ENCODE measurements at regions of chr9 and their contacts with region 1.

Region 1: GRCh38 chr9:114681594-114682332 is at the start of gene TEX48:
- DNase-seq: peak; percentile 63
- H3K4me3 ChIP-seq: no peak within 1 kb of the TSS
- H3K27ac ChIP-seq: no peak within 1 kb of the TSS
- H3K27me3 ChIP-seq: no peaks in the 10 kb centered on the region
- CTCF ChIP-seq: peak; percentile 89

Region 2: DNA sequence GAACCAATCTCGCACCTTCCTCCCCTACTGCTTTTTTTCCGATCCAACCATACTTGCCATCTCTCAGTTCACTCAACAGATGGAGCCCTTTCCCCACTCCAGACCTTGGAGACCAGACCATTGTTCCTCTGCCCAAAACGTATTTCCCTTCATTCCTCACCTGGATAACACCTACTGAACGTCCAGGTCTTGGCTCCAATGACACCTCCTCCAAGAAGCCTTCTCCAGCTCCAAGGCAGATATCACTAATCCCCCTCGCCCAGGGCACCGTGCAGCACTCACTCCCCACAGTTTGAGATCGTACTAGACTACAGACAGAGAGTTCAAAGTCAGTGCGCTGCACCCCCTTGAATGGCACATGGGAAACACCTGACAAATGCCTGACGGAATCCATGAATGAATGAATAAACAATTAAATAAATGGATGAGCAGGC is 246.9 kb before region 1 on chr9:
- in situ Hi-C with region 1: no loop called
- DNase-seq: peak; percentile 17
- H3K4me3 ChIP-seq: no peak overlapping the region
- H3K27ac ChIP-seq: no peak overlapping the region
- H3K27me3 ChIP-seq: peaks cover 14% of the 10 kb centered on the region
- CTCF ChIP-seq: peak; percentile 84

Region 3: GRCh38 chr9:115013998-115014397 is 332.2 kb after region 1 on chr9:
- in situ Hi-C with region 1: loop called (anchors 25 kb)
- DNase-seq: peak; percentile 67
- H3K4me3 ChIP-seq: no peak overlapping the region
- H3K27ac ChIP-seq: no peak overlapping the region
- H3K27me3 ChIP-seq: no peaks in the 10 kb centered on the region
- CTCF ChIP-seq: peak; percentile 83